AG04449 (cell line): ENCODE measurements at regions of chr12 and their contacts with region 1.

Region 1: DNA sequence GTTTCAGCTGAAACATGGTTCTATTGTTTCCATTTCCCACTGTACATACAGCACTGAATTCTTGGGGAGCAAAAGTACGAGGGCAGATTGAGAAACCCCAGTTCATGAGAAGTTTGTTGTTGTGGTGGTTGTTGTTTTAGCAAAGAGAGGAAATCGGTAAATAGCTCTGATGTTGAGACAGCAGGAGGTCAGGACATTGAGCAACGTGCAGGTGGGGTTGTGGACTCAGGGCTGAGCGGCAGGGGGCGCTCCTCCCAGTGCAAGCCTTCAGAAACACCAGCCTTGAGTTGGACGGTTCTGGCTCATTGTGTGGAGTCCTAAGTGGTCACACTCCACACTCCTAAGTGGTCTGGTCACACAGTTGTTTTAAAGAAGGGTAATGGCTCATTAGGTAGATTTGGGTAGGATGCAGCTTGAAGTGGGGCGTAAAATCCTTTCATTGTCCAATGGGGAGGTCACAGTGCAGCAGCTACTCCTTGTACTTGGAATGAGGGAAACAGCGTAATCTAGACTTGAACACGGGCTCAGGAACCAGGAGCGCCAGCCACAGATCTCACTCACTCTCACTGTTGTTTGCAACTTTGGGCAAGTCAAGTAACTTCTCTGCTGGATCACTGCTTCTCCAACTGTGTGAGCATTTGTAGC is 14.5 kb upstream of the PWP1 start:
- DNase-seq: no peak
- H3K4me3 ChIP-seq: no peak overlapping the region
- CTCF ChIP-seq: peak; percentile 60

Region 2: DNA sequence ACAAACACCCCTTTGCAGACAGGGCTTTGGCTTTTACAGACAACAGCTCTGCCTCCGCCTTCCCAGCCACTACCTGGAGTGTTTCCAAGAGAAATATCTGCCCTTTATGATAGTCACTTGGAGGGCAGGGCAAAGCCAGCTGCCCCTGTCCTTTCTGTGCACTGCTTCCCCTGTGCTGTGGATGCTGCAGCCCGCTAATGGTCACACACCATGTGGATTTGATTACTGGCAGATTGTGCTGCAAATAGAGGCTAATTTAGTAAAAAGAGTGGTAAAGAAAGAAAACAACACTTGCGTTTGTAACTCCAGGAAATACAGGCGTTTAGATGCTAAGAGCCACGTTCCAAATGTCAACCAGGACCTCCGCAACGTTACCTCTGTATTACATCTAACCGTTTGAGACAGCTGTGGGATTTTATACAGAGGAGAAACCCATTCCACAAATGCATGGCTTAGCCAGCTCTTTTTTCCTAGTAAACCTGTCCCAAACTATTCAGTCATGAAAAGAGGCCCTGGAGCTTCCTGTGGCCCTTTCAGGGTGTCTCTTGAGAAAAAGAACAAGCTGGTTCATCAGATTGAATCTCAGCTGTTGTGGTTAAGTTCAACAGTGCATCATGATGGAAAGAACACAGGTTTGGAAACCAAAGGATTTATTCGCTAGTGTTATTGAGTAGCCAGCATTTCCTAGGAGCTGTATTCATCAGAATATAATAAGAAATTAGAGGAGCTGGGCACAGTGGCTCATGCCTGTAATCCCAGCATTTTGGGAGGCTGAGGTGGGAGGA is 15.6 kb before region 1 on chr12:
- CTCF ChIA-PET with region 1: interaction called, 11 read pairs
- POLR2A ChIA-PET with region 1: no interaction called
- DNase-seq: no peak
- H3K4me3 ChIP-seq: no peak overlapping the region
- CTCF ChIP-seq: no peak

Region 3: GRCh38 chr12:107685360-107686248 is 14.5 kb after region 1 on chr12 and contains the start of gene PWP1:
- CTCF ChIA-PET with region 1: interaction called, 61 read pairs
- POLR2A ChIA-PET with region 1: interaction called, 4 read pairs
- DNase-seq: peak; percentile 63
- H3K4me3 ChIP-seq: peak within 1 kb of the TSS; percentile 100
- CTCF ChIP-seq: no peak